ENCODE measurements at regions of chr6 and their contacts with region 1.

Region 1: DNA sequence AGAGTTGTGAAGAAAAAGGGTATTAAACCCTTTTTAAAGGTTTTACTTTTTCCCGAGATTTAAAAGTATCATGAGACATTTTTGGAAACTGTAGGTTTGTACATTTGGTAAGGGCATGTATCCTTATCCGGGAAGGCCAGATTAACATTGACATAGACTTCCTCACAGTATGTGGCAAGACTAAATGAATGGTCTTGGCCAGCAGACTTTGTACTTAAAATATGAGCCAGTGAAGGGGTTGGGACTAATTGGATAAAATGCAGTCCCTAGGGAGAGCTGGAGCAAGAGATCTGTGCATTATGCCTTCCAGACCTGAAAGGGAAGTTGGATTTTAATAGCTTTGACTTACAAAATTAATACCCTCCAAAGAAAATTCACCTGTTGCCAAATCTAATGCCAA is 60.4 kb upstream of the CCN2 start:
- DNase-seq: no peak
- H3K4me3 ChIP-seq: no peak overlapping the region
- H3K27ac ChIP-seq: no peak overlapping the region
- H3K4me1 ChIP-seq: no peaks in the 10 kb centered on the region
- H3K27me3 ChIP-seq: no peaks in the 10 kb centered on the region
- CTCF ChIP-seq: no peak
- POLR2A ChIP-seq: no peak

Region 2: DNA sequence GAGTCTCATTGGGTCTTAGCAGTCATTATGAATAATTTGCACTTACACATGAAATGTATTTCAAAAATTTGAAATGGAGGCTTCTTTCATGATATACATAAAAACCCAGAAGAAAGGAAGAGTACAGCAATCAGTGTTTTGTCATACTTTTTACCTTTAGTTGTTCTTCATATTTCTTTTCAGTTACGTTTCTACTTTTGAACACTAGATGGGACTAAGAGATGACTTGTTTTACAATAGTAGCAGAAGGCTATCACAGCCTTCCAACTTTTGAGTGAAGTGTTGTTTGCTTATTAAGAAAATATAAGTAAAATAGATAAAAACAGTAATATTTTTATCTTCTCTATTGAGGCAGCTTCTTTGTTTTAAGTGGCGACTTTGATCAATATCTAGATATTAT is 1935.1 kb before region 1 on chr6:
- intact Hi-C with region 1: loop called (anchors 5 kb)
- DNase-seq: no peak
- H3K4me3 ChIP-seq: no peak overlapping the region
- H3K27ac ChIP-seq: no peak overlapping the region
- H3K4me1 ChIP-seq: no peaks in the 10 kb centered on the region
- H3K27me3 ChIP-seq: no peaks in the 10 kb centered on the region
- CTCF ChIP-seq: no peak
- POLR2A ChIP-seq: no peak

Region 3: GRCh38 chr6:130615816-130616215 is 1395.8 kb before region 1 on chr6:
- intact Hi-C with region 1: no loop called
- DNase-seq: no peak
- H3K4me3 ChIP-seq: no peak overlapping the region
- H3K27ac ChIP-seq: no peak overlapping the region
- H3K4me1 ChIP-seq: peaks cover 5% of the 10 kb centered on the region
- H3K27me3 ChIP-seq: no peaks in the 10 kb centered on the region
- CTCF ChIP-seq: no peak
- POLR2A ChIP-seq: no peak

Region 4: GRCh38 chr6:131146865-131147264 is 864.7 kb before region 1 on chr6:
- intact Hi-C with region 1: no loop called
- DNase-seq: no peak
- H3K4me3 ChIP-seq: no peak overlapping the region
- H3K27ac ChIP-seq: no peak overlapping the region
- H3K4me1 ChIP-seq: no peaks in the 10 kb centered on the region
- H3K27me3 ChIP-seq: no peaks in the 10 kb centered on the region
- CTCF ChIP-seq: no peak
- POLR2A ChIP-seq: no peak

Measured in vagina (tissue), 2 donors.